ENCODE measurements at regions of chr10 and their contacts with region 1.

Region 1: DNA sequence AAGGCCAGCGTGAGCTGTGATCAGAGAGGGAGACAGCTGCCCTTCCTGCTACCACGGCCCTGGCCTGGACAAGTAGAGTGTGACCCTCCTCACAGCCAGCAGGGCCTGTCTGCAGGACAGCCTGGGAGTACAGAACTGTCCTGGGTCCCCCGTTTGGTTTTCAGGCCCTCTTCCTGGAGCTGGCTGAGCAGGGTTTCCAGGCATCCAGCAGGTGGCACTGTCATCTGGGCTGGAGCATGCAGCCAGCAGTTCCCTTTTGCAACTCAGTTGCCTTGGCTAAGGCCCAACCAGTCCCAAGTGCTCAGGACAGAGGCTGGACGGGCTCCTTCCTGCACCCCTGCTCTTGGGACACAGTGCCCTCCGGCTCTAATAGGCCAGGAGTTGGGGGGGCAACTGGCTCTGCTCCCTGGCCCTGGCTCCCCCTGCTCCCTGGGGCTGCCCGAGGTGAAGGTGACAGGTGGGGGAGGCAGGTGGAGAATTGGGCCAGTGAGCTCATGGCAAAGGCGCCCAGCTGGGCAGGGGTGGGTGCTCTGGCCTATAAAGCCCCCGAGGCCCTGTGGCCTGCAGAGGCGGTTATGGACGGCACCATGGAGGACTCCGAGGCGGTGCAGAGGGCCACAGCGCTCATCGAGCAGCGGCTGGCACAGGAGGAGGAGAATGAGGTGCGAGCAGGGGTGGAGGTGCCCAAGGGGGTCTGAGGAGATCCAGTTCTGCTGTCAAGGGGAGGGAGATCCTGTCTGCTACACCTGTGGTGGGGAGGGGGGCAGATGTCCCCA is at the start of gene ANKRD2:
- H3K4me3 ChIP-seq: no peak within 1 kb of the TSS
- H3K27ac ChIP-seq: no peak within 1 kb of the TSS
- H3K4me1 ChIP-seq: peaks cover 6% of the 10 kb centered on the region
- CTCF ChIP-seq: peak; percentile 92

Region 2: GRCh38 chr10:97534746-97535367 is 37.5 kb before region 1 on chr10:
- CTCF ChIA-PET with region 1: interaction called, 10 read pairs
- POLR2A ChIA-PET with region 1: no interaction called
- H3K4me3 ChIP-seq: no peak overlapping the region
- H3K27ac ChIP-seq: no peak overlapping the region
- H3K4me1 ChIP-seq: no peaks in the 10 kb centered on the region
- CTCF ChIP-seq: peak; percentile 53; the same call in 1 of the 2 replicates

Region 3: DNA sequence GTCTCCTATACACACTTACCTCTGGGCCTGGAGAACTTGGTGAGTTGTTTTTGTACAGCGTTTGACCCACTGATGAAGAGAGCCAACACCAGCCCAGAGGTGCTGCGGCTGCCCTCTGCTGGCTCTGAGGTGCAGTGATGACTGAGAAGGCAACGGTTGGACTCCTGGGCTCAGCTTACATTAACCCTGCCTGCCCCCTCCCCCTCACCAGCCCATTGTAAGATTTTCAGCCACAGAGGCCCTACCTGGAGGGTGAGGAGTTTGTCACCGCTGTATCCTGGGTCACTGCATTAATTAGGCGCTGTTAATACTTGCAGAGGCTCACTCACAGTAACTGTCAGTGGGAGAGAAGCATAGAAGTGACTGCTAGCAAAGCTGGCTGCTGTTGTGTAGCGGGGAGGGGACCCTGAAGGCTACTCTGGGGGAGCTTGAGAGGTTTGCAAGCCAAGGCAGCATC is 18.8 kb before region 1 on chr10:
- CTCF ChIA-PET with region 1: interaction called, 15 read pairs
- POLR2A ChIA-PET with region 1: no interaction called
- H3K4me3 ChIP-seq: no peak overlapping the region
- H3K27ac ChIP-seq: no peak overlapping the region
- H3K4me1 ChIP-seq: peaks cover 6% of the 10 kb centered on the region; the same call in 1 of the 2 replicates
- CTCF ChIP-seq: peak; percentile 83

Region 4: DNA sequence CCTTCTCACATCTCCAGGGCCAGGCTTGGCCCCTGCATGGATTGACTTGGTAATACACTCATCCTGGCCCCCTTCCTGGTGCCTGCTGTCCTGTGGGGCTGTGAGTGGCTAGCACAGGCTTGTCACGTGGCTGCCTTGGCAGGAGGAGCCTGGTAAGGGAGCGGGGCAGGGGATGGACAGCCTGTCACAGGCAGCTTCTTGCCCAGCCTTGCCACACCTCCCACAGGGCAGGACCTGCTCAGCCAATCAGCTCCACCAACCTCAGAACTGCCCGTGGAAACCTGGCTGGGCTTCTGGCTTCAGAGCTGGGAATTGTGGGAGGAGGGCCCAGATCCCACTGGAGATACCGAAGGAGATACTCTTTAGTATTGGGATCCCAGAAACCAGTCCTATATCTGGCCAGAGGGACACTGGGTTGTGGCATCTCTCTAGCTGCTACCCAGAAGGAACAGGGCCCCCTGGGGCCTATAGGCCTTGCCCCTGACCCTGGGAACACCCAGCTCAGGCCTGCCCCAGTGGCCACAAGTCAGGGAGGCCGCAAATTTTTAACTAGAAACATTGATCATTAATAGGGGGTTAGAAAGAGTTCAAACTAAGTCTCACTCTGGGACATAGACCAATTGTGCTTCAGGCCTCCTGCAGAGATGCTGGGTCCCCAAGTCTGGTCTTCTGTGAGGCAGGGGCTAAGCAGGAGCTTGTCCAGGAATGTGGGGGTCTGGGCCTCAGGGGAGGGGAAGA is 11.8 kb after region 1 on chr10 and contains the start of gene HOGA1:
- CTCF ChIA-PET with region 1: interaction called, 18 read pairs
- POLR2A ChIA-PET with region 1: interaction called, 5 read pairs
- H3K4me3 ChIP-seq: no peak within 1 kb of the TSS
- H3K27ac ChIP-seq: no peak within 1 kb of the TSS
- H3K4me1 ChIP-seq: peaks cover 3% of the 10 kb centered on the region; the same call in 1 of the 2 replicates
- CTCF ChIP-seq: no peak

Region 5: DNA sequence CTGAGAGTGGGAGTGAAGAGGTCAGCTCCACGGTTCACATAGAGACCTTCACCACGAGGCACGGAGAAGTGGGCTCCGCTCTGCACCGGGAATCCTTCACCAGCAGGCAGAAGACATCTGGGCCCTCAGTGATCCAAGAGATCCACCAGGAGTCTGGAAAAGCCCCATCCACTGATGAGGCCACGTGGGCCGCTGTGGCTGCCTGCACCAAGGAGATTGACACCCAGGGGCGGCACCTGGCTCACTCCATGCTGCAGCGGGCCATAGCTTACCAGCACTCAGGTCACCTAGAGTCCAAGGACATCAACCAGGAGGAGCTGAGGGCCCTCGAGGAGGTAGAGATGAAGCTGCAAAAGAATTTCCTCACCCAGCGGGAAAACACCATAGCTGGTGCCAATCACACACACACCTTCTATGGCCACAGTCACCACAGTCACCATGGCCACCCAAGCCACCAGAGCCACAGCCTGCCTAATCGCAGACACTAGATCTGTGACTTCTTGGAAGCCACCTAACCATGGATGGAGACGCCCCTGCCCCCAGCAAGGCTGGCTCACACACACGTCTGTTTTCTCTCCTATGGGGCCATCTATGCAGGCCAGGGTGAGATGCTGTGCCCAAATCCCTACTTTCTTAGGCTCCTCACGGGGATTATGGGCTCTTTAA is 17.8 kb after region 1 on chr10:
- CTCF ChIA-PET with region 1: interaction called, 18 read pairs
- POLR2A ChIA-PET with region 1: interaction called, 5 read pairs
- H3K4me3 ChIP-seq: no peak overlapping the region
- H3K27ac ChIP-seq: no peak overlapping the region
- H3K4me1 ChIP-seq: no peaks in the 10 kb centered on the region
- CTCF ChIP-seq: no peak

Region 6: GRCh38 chr10:97596101-97597062 is 24.0 kb after region 1 on chr10:
- CTCF ChIA-PET with region 1: interaction called, 11 read pairs
- POLR2A ChIA-PET with region 1: interaction called, 3 read pairs
- H3K4me3 ChIP-seq: no peak overlapping the region
- H3K27ac ChIP-seq: no peak overlapping the region
- H3K4me1 ChIP-seq: no peaks in the 10 kb centered on the region
- CTCF ChIP-seq: no peak

Region 7: GRCh38 chr10:97612386-97612785 is 40.0 kb after region 1 on chr10:
- CTCF ChIA-PET with region 1: interaction called, 78 read pairs
- POLR2A ChIA-PET with region 1: no interaction called
- H3K4me3 ChIP-seq: no peak overlapping the region
- H3K27ac ChIP-seq: no peak overlapping the region
- H3K4me1 ChIP-seq: no peaks in the 10 kb centered on the region
- CTCF ChIP-seq: peak; percentile 70; the same call in 1 of the 2 replicates

Measured in HEK293 (cell line).